ENCODE measurements at regions of chr4 and their contacts with region 1.

Region 1: GRCh38 chr4:145945431-145946155 is 7.0 kb upstream of the ZNF827 start:
- DNase-seq: peak; percentile 85
- H3K4me3 Mint-ChIP-seq: no peak overlapping the region
- H3K27ac Mint-ChIP-seq: no peak overlapping the region
- H3K4me1 Mint-ChIP-seq: no peaks in the 10 kb centered on the region
- H3K27me3 Mint-ChIP-seq: no peaks in the 10 kb centered on the region
- CTCF ChIP-seq: no peak

Region 2: DNA sequence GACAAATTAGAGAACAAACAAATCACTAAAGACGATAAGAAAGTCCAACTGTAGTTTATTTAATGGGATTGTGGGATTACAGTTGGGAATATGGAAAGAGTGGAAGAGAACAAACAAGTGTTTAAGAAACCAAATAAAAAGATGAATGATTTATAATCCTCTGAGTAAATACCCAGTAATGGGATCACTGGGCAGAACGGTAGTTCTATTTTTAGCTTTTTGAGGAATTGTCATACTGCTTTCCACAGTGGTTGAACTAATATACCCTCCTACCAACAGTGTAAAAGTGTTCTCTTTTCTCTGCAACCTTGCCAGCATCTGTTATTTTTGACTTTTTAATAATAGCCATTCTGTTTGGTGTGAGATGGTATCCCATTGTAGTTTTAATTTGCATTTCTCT is 250.7 kb before region 1 on chr4:
- CTCF ChIA-PET with region 1: no interaction called
- POLR2A ChIA-PET with region 1: no interaction called
- intact Hi-C with region 1: no loop called
- DNase-seq: no peak
- H3K4me3 Mint-ChIP-seq: no peak overlapping the region
- H3K27ac Mint-ChIP-seq: no peak overlapping the region
- H3K4me1 Mint-ChIP-seq: no peaks in the 10 kb centered on the region
- H3K27me3 Mint-ChIP-seq: no peaks in the 10 kb centered on the region
- CTCF ChIP-seq: no peak

Region 3: DNA sequence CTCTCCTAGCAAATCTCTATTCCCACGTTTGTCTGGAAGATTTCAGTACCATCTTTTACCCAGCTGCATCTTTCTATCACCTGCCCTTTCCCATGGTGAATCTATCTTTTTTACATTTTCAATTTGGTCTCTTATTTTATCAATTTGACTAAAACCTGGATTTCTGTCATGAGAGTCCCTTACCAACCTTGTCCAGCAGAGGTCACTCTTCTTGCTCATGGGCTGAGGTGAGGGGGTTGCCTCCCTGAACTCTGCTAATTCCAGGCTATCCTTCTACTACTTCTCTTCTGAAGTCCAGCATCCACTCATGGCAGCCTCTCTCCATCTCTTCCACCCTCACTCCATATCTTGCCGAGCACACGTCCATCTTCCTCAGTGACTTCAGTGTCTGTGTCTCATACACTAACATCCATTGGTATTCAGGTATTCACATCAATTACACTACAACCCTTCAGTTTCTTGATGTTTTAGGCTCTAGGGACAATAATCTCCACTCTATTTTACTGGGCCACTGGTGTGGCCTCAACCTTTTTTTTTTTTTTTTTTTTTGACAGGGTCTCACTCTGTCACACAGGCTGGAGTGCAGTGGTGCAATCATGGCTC is 10.8 kb after region 1 on chr4:
- CTCF ChIA-PET with region 1: interaction called, 16 read pairs
- POLR2A ChIA-PET with region 1: interaction called, 4 read pairs
- intact Hi-C with region 1: no loop called
- DNase-seq: peak; percentile 62
- H3K4me3 Mint-ChIP-seq: no peak overlapping the region
- H3K27ac Mint-ChIP-seq: no peak overlapping the region
- H3K4me1 Mint-ChIP-seq: peaks cover 32% of the 10 kb centered on the region
- H3K27me3 Mint-ChIP-seq: no peaks in the 10 kb centered on the region
- CTCF ChIP-seq: peak; percentile 70